Endothelial cell of umbilical vein (primary cell): ENCODE measurements at regions of chr3 and their contacts with region 1.

Region 1: DNA sequence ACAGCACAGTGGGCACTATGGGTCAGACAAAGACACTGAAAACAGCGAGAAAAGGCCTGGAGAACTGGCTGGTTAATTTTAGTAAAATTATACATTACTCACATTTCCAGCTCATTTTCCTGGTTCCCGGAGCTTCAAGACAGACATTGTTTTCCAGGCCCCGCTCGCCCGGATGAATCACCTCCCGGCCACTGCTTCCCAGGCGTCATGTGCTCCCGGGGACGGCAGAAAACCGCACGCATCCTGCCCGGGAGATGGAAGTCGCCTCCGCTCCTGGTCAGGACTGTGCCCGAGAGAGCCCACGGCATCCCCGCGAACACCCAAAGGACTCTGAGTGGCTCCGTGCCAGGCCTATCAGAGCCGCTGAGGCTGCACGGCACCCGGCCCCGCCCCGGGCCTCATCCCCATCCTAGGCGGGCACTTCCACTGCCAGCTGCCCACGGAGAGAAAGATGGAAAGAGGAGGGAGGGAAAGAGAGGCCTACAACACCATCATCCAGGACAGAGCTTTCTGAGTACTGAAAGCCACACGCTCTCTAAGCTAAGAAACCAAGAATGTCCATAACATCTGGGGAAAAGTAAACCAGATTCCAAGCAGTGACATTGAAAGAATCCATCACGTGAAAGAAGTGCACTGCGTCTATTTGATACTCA is 75.1 kb downstream of the VGLL4 start:
- DNase-seq: peak; percentile 97
- H3K4me3 ChIP-seq: peak overlapping the region in 2 of 3 experiments; percentile 3 to 10
- H3K27ac ChIP-seq: peak overlapping the region; percentile 97
- H3K4me1 ChIP-seq: peaks cover 53% of the 10 kb centered on the region
- H3K27me3 ChIP-seq: no peaks in the 10 kb centered on the region
- CTCF ChIP-seq: no peak
- POLR2A ChIP-seq: peak; percentile 74

Region 2: GRCh38 chr3:11477407-11477911 is 91.2 kb before region 1 on chr3:
- CTCF ChIA-PET with region 1: no interaction called
- POLR2A ChIA-PET with region 1: no interaction called
- dilution Hi-C with region 1: no loop called
- intact Hi-C with region 1: loop called (anchors 2 kb)
- DNase-seq: peak; percentile 95
- H3K4me3 ChIP-seq: peak overlapping the region; percentile 10 to 82 (median 39)
- H3K27ac ChIP-seq: peak overlapping the region; percentile 100
- H3K4me1 ChIP-seq: peaks cover 47% of the 10 kb centered on the region
- H3K27me3 ChIP-seq: no peaks in the 10 kb centered on the region
- CTCF ChIP-seq: no peak
- POLR2A ChIP-seq: peak; percentile 81

Region 3: DNA sequence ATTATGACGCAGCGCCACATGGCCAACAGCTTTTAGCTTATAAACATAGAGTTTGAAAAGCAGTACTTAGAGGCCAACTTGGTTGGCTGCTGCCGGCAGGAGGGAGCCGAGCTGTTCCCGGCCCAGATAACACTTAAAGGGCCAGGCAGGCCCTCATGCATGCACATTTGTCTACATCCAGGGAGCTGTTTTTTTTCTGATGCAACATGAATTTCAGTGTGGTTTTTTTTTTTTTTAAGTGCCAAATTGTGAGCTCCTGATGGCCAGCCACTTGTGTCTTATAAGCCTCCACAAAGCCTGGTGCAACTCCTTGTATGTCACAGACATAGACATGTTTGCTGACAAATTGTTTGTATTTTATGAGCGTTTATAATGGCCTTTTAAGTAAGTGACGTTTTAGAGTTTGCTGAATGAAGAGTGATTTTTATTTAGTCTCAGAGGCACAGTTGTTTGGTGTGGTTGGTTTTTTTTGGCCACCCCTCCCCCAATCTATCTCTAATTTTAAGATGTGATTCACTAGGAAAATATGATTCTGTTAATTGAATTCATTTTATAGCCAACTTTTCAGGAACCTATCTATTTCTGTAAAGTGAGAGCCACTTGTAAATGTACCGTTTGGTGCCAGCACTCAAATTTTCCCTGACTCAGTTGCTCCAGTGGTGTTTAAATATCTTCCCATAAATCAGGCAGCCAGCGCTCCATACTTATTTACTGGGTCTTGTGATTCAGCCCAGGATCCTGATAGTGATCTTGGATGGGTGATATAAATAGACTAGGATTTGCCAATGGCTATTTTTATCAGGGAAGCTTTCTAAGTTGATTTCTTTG is 59.2 kb before region 1 on chr3:
- CTCF ChIA-PET with region 1: interaction called, 3 read pairs
- POLR2A ChIA-PET with region 1: no interaction called
- dilution Hi-C with region 1: no loop called
- intact Hi-C with region 1: loop called (anchors 1 kb)
- DNase-seq: peak; percentile 89
- H3K4me3 ChIP-seq: no peak overlapping the region
- H3K27ac ChIP-seq: peak overlapping the region; percentile 87
- H3K4me1 ChIP-seq: peaks cover 36% of the 10 kb centered on the region
- H3K27me3 ChIP-seq: no peaks in the 10 kb centered on the region
- CTCF ChIP-seq: no peak
- POLR2A ChIP-seq: no peak

Region 4: GRCh38 chr3:11582191-11582968 is 13.8 kb after region 1 on chr3:
- CTCF ChIA-PET with region 1: no interaction called
- POLR2A ChIA-PET with region 1: no interaction called
- dilution Hi-C with region 1: no loop called
- intact Hi-C with region 1: loop called (anchors 1 kb)
- DNase-seq: peak; percentile 92
- H3K4me3 ChIP-seq: peak overlapping the region in 1 of 3 experiments; percentile 45
- H3K27ac ChIP-seq: peak overlapping the region; percentile 68
- H3K4me1 ChIP-seq: peaks cover 27% of the 10 kb centered on the region
- H3K27me3 ChIP-seq: no peaks in the 10 kb centered on the region
- CTCF ChIP-seq: no peak
- POLR2A ChIP-seq: peak; percentile 12

Region 5: GRCh38 chr3:11643605-11644087 is 75.0 kb after region 1 on chr3 and contains the start of gene VGLL4:
- CTCF ChIA-PET with region 1: interaction called, 10 read pairs
- POLR2A ChIA-PET with region 1: interaction called, 3 read pairs
- dilution Hi-C with region 1: no loop called
- intact Hi-C with region 1: loop called (anchors 1 kb)
- DNase-seq: peak; percentile 95
- H3K4me3 ChIP-seq: peak within 1 kb of the TSS; percentile 70 to 99 (median 79)
- H3K27ac ChIP-seq: peak within 1 kb of the TSS; percentile 92
- H3K4me1 ChIP-seq: peaks cover 30% of the 10 kb centered on the region
- H3K27me3 ChIP-seq: no peaks in the 10 kb centered on the region
- CTCF ChIP-seq: peak in 1 of 2 donors; percentile 4
- POLR2A ChIP-seq: peak; percentile 95
- total RNA-seq, gene VGLL4: 58.9 and 67.0 TPM in 2 replicates

Region 6: DNA sequence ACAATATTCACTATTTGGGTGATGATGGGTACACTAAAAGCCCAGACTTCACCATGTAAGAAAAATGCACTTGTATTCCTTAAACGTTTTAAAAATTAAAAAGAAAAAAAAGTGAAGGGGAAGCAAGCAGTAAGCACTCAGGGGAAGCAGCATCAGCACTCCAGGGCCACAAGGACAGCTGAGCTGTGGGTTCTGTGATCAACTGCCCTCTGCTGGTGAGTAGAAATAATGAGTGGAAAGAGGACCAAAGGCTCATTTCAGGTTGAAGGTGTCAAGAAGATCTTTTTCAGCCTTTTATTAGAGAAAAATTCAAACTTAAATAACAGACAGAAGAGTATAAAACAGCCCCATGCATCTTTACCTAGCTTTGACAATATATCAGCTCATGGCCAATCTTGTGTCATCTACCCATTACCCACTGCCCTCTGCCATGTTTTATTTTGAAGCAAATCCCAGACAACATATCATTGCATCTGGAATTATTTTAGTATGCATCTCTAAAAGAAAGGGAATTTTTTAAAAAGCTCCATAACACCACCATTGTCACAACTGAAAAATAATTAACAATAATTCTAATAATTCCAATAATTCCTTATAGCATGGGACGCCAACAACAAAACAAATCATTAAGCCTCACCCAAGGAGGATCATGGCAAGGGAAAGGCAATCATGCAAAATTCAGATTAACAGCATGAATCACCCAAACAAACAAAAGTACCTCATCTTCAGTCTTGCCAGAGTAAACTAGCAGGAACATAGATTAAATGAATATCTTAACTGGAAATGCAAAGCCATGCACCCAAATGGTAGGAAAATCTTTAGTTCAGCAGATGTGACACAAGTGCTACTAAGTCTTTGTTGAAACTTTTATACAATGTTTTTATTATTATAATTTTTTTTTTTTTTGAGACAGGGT is 235.6 kb after region 1 on chr3:
- CTCF ChIA-PET with region 1: no interaction called
- POLR2A ChIA-PET with region 1: no interaction called
- dilution Hi-C with region 1: no loop called
- intact Hi-C with region 1: loop called (anchors 10 kb)
- DNase-seq: peak; percentile 53
- H3K4me3 ChIP-seq: no peak overlapping the region
- H3K27ac ChIP-seq: no peak overlapping the region
- H3K4me1 ChIP-seq: no peaks in the 10 kb centered on the region
- H3K27me3 ChIP-seq: no peaks in the 10 kb centered on the region
- CTCF ChIP-seq: peak; percentile 68 to 70
- POLR2A ChIP-seq: no peak